Cardiac septum (tissue), 1 donor: ENCODE measurements at regions of chr6 and their contacts with region 1.

Region 1: DNA sequence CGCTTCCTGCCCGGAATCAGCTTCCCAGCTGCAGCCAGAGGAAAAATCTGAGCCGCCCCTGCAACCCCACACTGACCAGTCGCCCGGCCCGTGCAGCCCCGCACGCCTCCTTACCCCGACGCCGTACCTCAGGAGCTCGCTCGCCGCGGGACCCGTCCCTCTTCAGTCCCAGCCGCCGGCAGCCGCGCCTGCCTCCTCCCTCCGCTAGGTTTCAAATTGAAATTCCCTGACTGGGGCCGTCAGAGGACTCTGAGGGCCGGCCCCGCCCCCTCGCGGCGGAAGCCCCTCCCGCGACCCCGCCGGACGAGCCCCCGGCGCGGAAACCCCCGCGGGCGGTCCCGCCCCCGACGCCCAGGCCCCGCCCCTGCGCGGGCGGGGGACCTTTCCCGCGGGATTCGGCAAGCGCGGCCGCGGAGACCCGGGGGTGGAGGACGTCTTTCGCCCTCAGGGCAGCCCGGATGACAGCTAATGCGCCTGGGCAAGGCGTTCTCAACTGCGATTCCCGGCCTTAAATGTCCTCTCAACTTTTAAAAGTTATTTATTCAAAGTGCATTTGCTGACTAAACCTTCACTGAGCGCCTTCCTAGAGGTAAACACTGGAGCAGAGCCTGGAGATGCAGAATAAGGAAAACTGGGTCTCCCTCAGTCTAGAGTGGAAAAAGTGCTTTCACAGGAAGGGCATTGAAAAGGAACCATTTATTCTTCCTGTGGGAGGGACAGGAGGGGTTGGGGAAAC is at the start of gene EPB41L2:
- DNase-seq: peak; percentile 89
- total RNA-seq, gene EPB41L2: 54.1 TPM

Region 2: GRCh38 chr6:130885392-130886192 is 177.6 kb before region 1 on chr6:
- intact Hi-C with region 1: loop called (anchors 5 kb)
- DNase-seq: no peak

Region 3: DNA sequence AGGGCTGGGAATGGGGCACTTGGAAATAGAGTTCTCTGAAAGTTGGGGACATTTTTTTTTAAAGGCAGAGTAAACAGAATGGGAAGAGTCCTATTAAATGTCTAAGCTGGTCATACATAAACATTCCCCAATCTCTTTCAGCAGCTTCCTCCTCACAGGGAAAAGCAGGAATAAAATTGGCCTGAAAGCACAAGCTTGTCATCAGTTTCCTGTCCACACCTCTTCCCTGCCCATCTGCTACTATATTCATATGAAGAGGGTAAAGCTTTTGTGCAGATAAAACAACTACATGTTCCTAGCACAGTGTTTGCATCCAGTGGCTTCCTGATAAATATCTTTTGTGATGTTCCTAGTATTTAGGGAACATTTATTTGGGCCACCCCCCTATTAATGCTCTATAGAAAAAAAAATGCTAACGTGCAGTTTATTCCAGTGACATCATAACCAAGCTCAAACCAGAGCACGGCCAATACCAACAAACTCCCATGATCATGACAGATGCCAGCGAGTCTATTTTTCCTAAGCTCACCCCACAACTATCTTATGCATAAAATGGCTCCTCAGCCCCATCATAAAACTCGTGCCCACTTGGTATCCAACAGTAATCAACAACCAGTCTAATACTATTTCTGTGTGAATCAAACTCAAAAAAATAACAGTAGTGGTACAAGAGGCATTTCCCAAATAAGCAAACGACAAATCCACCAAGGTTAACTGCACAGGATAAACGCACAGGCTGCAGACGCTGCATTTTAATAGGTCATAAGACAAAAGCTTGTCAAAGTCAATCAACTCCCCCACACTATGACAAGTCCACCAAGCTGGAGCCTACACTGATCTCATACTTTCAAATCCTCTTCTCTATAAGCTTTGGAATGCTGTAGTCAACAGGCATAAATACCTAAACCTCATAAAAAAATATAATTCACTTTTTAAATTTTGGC is 95.4 kb before region 1 on chr6:
- intact Hi-C with region 1: loop called (anchors 1 kb)
- DNase-seq: no peak

Region 4: GRCh38 chr6:131116749-131117360 is 53.7 kb after region 1 on chr6:
- intact Hi-C with region 1: loop called (anchors 10 kb)
- DNase-seq: no peak